ENCODE measurements at regions of chr2 and their contacts with region 1.

Region 1: GRCh38 chr2:234459401-234460009 is 37.4 kb downstream of the ARL4C start:
- DNase-seq: no peak

Region 2: DNA sequence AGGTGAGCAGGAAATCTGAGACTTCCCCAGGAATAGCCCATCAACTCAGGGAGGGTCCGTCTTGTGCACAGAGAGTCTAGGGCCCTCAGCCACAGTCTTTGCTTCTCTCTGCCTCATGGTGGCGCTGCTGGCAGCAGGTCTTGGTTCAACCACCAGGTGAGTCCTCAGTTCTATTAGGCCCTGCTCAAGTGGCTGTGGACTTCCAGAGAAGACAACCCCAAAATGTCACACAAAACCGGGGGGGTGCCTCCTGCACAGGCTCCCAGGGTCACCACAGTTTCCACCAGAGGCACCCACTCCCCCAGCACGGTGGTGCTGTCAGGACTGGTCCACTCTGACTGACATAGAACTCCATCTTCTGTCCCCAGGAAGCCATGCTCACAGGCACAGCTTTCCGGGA is 1922.4 kb before region 1 on chr2:
- intact Hi-C with region 1: loop called in 1 of 2 experiments (anchors 5 kb)
- DNase-seq: peak; percentile 79

Region 3: DNA sequence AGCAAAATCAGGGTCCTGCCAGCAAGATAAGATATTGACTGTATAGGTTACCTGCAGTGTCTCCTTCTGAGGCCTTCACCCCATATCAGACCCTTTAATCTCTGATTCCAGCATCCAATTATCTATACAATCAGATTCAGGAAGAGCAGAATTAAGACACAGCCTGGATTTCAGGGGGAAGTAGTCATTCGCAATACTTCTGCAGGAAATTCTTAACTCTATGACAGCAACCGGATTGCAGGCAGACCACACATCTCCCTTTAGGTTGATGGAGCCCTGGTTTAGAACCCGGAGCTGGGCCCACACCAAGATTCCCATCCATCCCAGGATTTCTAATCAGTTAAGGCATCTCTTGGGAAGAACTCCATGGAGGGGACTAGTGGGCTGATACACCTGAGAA is 27.9 kb after region 1 on chr2:
- intact Hi-C with region 1: loop called in 1 of 2 experiments (anchors 2 kb)
- DNase-seq: no peak

Region 4: GRCh38 chr2:234533626-234534025 is 74.1 kb after region 1 on chr2:
- intact Hi-C with region 1: no loop called
- DNase-seq: no peak

Region 5: GRCh38 chr2:234661175-234661574 is 201.7 kb after region 1 on chr2:
- intact Hi-C with region 1: no loop called
- DNase-seq: no peak